ENCODE measurements at regions of chr5 and their contacts with region 1.

Region 1: GRCh38 chr5:112895682-112896081 is 26.3 kb downstream of the REEP5 start:
- DNase-seq: no peak
- H3K4me3 ChIP-seq: no peak overlapping the region
- H3K27me3 ChIP-seq: no peaks in the 10 kb centered on the region
- CTCF ChIP-seq: no peak

Region 2: DNA sequence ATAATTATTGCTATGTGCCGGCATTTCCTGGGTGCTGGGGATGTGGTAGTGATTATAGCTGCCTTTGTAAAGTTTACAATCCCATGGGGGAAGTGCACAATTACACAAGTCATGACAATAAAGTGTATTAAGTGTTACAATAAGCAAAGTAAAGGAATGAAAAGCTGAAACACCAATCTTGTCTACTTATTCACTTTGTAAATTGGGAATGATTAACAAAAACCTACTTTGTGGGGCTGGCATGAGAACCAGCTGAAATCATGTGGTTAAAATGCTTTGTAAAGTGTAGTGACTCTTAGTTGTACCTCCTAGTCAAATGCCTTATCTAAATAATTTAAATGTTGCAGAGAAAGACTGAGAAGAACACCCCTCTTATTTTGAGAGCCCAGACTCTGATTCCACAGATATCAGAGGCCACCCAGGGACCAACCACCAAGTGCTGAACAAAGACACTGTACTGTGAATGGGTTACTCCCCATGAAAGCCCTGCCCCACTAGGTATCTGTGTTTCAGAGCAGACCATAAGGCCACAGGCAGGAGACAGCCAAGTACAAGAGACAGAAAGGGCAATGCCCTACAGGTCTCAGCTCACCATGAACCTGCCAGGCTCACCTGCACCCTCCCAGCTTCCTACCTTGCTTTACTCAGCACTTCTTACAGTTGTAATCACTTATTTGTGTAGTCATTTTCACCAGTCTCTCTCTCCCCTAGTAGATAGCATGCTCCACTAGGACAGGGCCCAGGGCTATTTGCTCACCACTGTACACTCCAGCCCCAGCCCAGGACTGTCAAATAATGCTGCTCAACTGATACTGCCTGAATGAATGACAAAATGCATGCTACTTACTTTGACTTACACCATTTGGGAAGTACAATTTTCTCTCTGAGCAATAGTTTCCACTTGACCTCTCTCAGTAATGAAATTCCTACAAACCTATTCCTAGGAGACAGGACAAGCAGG is 259.6 kb before region 1 on chr5:
- CTCF ChIA-PET with region 1: no interaction called
- POLR2A ChIA-PET with region 1: no interaction called
- DNase-seq: no peak
- H3K4me3 ChIP-seq: no peak overlapping the region
- H3K27me3 ChIP-seq: no peaks in the 10 kb centered on the region
- CTCF ChIP-seq: no peak

Region 3: GRCh38 chr5:112762113-112762810 is 133.4 kb before region 1 on chr5:
- CTCF ChIA-PET with region 1: no interaction called
- POLR2A ChIA-PET with region 1: no interaction called
- DNase-seq: no peak
- H3K4me3 ChIP-seq: no peak overlapping the region
- H3K27me3 ChIP-seq: no peaks in the 10 kb centered on the region
- CTCF ChIP-seq: no peak

Region 4: DNA sequence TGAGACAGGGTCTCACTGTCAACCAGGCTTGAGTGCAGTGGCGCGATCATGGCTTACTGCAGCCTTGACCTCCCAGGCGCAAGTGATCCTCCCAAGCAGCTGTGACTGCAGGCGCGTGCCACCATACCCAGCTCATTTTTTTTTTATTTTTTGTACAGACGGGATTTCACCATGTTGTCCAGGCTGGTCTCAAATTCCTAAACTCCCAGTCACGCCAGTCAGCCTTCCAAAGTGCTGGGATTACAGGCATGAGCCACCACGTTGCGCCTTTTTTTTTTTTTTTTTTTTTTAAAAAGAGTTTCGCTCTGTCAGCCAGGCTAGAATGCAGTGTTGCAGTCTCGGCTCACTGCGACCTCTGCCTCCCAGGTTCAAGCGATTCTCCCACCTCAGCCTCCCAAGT is 61.7 kb before region 1 on chr5:
- CTCF ChIA-PET with region 1: no interaction called
- POLR2A ChIA-PET with region 1: no interaction called
- DNase-seq: no peak
- H3K4me3 ChIP-seq: no peak overlapping the region
- H3K27me3 ChIP-seq: no peaks in the 10 kb centered on the region
- CTCF ChIP-seq: no peak

Region 5: DNA sequence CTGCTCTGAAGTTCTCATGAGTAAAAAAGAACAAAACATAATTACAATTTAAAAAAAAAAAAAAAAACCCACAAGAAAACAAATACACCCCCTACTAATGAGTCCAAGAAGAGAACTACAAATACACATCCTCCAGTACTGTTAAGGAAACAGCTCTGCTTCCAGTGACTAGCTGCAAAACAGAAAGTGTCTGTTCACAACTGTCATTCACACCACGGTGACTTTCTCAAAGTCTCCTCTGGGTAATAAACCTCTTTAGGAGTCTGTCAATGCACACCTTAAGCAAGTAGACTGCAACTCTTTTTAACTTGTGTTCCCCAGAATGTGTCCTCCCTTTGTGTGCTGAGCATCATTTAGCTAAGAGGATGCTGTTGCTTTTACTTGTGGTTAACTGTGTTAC is 20.1 kb after region 1 on chr5:
- CTCF ChIA-PET with region 1: interaction called, 4 read pairs
- POLR2A ChIA-PET with region 1: interaction called, 14 read pairs
- DNase-seq: no peak
- H3K4me3 ChIP-seq: no peak overlapping the region
- H3K27me3 ChIP-seq: no peaks in the 10 kb centered on the region
- CTCF ChIP-seq: no peak

Measured in BJ (cell line).